AG04450 (cell line): ENCODE measurements at regions of chr12 and their contacts with region 1.

Region 1: DNA sequence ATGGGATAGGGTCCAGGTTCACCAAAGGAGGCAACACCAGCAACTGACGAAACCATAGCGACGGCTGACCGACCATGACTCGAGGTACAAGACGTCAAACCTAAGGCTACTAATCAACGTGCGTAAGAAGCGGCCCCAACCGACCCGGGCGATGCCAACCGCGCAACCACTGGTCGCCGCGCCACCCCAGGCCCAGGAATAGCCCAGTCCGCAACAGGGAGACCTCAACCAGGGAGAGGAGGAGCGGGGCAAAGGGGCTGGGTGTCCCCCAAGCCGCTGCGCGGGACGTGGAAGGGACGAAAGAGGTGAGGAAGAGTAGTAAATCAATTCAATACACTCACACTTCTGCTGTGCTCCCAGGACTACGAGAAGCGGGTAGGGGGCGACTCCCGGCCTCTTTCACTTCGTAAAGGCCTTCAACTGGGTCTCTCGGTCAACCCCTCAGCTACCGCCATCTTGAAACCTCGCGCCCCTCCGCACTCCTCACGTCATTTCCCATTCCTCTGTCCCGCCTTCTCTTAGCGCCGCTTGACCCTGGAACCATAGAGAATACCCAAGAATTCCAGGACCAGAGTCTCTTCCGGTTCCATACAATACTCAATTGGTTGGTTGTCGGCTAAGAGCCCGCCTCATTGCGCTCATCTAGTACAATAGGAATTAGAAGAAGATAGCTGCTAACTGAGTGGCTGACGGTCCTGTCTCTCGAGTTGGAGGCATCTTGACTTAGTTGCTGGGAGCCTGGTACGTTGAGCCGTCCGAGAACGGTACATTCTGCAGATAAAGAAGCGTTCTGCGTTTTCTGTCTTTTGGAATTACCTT is at the starts of genes C12orf60 and WBP11:
- DNase-seq: peak; percentile 97
- H3K4me3 ChIP-seq: peak within 1 kb of the TSS; percentile 96
- H3K27ac ChIP-seq: peak within 1 kb of the TSS; percentile 91
- H3K27me3 ChIP-seq: no peaks in the 10 kb centered on the region
- CTCF ChIP-seq: no peak
- polyA plus RNA-seq, gene C12orf60: 0.57 and 1.0 TPM in 2 replicates
- polyA plus RNA-seq, gene WBP11: 13.2 and 16.5 TPM in 2 replicates

Region 2: GRCh38 chr12:14769969-14770495 is 33.2 kb before region 1 on chr12:
- CTCF ChIA-PET with region 1: interaction called, 14 read pairs
- POLR2A ChIA-PET with region 1: interaction called, 19 read pairs
- DNase-seq: no peak
- H3K4me3 ChIP-seq: peak overlapping the region; percentile 92
- H3K27ac ChIP-seq: peak overlapping the region; percentile 91
- H3K27me3 ChIP-seq: no peaks in the 10 kb centered on the region
- CTCF ChIP-seq: peak; percentile 76

Region 3: GRCh38 chr12:14824012-14824634 is 20.9 kb after region 1 on chr12:
- CTCF ChIA-PET with region 1: no interaction called
- POLR2A ChIA-PET with region 1: no interaction called
- DNase-seq: no peak
- H3K4me3 ChIP-seq: no peak overlapping the region
- H3K27ac ChIP-seq: no peak overlapping the region
- H3K27me3 ChIP-seq: no peaks in the 10 kb centered on the region
- CTCF ChIP-seq: no peak